GM12878 (cell line): ENCODE measurements at regions of chr19 and their contacts with region 1.

Region 1: DNA sequence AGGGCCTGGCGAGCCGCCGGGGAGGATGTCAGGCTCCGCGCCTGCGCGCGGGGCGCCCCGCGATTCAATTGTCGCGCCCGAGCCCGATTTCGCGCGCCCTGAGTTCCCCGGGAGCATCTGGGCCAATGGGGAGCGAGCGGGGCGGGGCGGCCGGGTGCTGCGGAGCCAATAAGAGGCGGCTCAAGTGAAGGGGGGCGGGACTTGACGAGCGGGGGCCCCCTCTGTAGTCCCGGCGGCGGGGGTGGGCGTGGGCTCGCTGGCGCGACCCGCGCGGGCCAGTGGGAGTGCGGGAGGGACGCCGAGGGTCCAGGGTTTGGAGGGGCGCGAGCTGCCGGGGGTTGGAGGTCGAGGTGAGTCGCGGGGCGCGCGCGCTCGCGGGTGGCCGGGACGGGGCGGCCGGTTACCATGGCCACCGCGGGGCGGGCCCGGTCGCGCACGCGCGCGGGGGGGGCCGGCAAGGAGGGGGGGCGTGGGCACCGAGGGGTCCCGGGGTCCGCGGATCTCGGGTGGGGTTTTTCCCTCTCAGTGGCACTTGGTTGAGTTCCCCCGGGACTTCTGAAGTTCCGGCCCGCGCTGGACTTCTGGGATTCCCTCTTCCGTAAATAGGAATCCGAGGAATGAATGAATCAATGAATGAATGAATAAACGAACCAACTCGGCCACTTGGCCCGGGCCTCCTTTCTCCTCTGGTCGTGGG is 744 bp downstream of the UHRF1 start:
- DNase-seq: peak; percentile 51
- ATAC-seq: peak; percentile 90
- H3K4me3 ChIP-seq: peak overlapping the region; percentile 99
- H3K27ac ChIP-seq: peak overlapping the region; percentile 78
- H3K4me1 ChIP-seq: peaks cover 29% of the 10 kb centered on the region
- H3K27me3 ChIP-seq: no peaks in the 10 kb centered on the region
- CTCF ChIP-seq: no peak
- EP300 ChIP-seq: no peak
- POLR2A ChIP-seq: peak; percentile 56; the same call in 1 of the 2 replicates
- RAD21 ChIP-seq: no peak

Region 2: GRCh38 chr19:4449022-4449638 is 460.9 kb before region 1 on chr19:
- CTCF ChIA-PET with region 1: no interaction called
- POLR2A ChIA-PET with region 1: no interaction called
- RAD21 ChIA-PET with region 1: no interaction called
- SMC1A ChIA-PET with region 1: no interaction called
- in situ Hi-C with region 1: no loop called
- intact Hi-C with region 1: no loop called
- DNase-seq: no peak
- ATAC-seq: no peak; the same call in 2 of the 3 replicates
- H3K4me3 ChIP-seq: no peak overlapping the region
- H3K27ac ChIP-seq: no peak overlapping the region
- H3K4me1 ChIP-seq: no peaks in the 10 kb centered on the region
- H3K27me3 ChIP-seq: no peaks in the 10 kb centered on the region
- CTCF ChIP-seq: no peak
- EP300 ChIP-seq: no peak
- POLR2A ChIP-seq: peak; percentile 39; the same call in 1 of the 2 replicates
- RAD21 ChIP-seq: no peak

Region 3: DNA sequence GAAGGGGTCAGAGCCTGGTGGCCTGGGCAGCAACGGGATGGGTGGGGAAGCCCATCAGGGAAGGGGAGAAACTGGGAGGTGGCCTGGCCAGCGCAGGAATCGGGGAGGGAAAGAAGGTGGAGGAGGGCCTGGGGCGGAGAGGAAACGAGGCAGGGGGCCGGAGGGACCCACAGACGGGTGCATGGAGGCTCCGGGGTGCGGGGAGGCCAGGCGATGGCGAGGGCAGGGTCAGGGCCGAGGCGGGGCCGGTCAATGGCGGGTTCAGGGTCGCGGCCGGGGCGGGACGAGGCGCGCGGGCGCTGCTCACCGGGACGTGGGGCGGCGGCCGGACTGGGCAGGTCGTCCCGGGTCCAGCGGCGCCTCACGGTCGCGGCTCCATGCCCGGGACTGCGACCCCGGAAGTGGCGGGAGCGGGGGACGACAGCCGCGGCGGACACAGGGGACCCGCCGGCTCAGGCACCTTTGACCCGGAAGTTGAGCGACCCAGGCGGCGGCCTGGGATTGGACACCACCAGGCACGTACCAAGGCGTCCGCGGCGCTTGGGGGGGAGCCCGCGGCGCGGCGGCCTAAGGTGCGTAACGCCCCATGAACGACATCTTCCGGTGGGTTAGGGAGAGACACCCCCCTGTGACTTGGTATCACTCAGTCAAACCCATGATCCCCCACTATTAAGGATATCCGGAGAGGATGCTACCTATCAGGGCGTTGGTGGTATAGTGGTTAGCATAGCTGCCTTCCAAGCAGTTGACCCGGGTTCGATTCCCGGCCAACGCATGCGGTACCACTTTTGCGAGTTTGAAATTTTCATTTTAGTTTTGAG is 186.5 kb before region 1 on chr19 and contains the start of gene DPP9:
- CTCF ChIA-PET with region 1: interaction called, 3 read pairs
- POLR2A ChIA-PET with region 1: no interaction called
- RAD21 ChIA-PET with region 1: no interaction called
- SMC1A ChIA-PET with region 1: no interaction called
- in situ Hi-C with region 1: no loop called
- intact Hi-C with region 1: loop called (anchors 5 kb)
- DNase-seq: peak; percentile 100
- ATAC-seq: peak; percentile 96
- H3K4me3 ChIP-seq: peak within 1 kb of the TSS; percentile 100
- H3K27ac ChIP-seq: peak within 1 kb of the TSS; percentile 89
- H3K4me1 ChIP-seq: peaks cover 18% of the 10 kb centered on the region
- H3K27me3 ChIP-seq: no peaks in the 10 kb centered on the region
- CTCF ChIP-seq: peak in 2 of 3 experiments; percentile 21 to 41; a peak in 2 of 6 replicates
- EP300 ChIP-seq: peak; percentile 48 to 85; a peak in 3 of 4 replicates
- POLR2A ChIP-seq: peak; percentile 76
- RAD21 ChIP-seq: no peak
- polyA plus RNA-seq, gene DPP9: 0.64 to 1.2 TPM

Region 4: GRCh38 chr19:4803736-4804695 is 106.0 kb before region 1 on chr19:
- CTCF ChIA-PET with region 1: interaction called, 310 read pairs
- POLR2A ChIA-PET with region 1: no interaction called
- RAD21 ChIA-PET with region 1: interaction called, 176 read pairs
- SMC1A ChIA-PET with region 1: interaction called, 94 read pairs
- in situ Hi-C with region 1: loop called (anchors 5 kb)
- intact Hi-C with region 1: loop called (anchors 1 kb)
- DNase-seq: no peak
- ATAC-seq: peak; percentile 95
- H3K4me3 ChIP-seq: no peak overlapping the region
- H3K27ac ChIP-seq: no peak overlapping the region
- H3K4me1 ChIP-seq: peaks cover 6% of the 10 kb centered on the region
- H3K27me3 ChIP-seq: no peaks in the 10 kb centered on the region
- CTCF ChIP-seq: peak; percentile 86 to 93 (median 90)
- EP300 ChIP-seq: no peak
- POLR2A ChIP-seq: no peak
- RAD21 ChIP-seq: peak; percentile 66

Region 5: GRCh38 chr19:4851551-4852290 is 58.3 kb before region 1 on chr19:
- CTCF ChIA-PET with region 1: interaction called, 28 read pairs
- POLR2A ChIA-PET with region 1: no interaction called
- RAD21 ChIA-PET with region 1: interaction called, 20 read pairs
- SMC1A ChIA-PET with region 1: interaction called, 25 read pairs
- in situ Hi-C with region 1: no loop called
- intact Hi-C with region 1: no loop called
- DNase-seq: no peak
- ATAC-seq: peak; percentile 96
- H3K4me3 ChIP-seq: no peak overlapping the region
- H3K27ac ChIP-seq: no peak overlapping the region; the same call in 1 of the 2 replicates
- H3K4me1 ChIP-seq: peaks cover 28% of the 10 kb centered on the region
- H3K27me3 ChIP-seq: no peaks in the 10 kb centered on the region
- CTCF ChIP-seq: peak; percentile 88 to 92 (median 88)
- EP300 ChIP-seq: no peak
- POLR2A ChIP-seq: no peak; the same call in 1 of the 2 replicates
- RAD21 ChIP-seq: peak; percentile 84

Region 6: GRCh38 chr19:4922530-4923275 is 12.7 kb after region 1 on chr19:
- CTCF ChIA-PET with region 1: no interaction called
- POLR2A ChIA-PET with region 1: no interaction called
- RAD21 ChIA-PET with region 1: no interaction called
- SMC1A ChIA-PET with region 1: no interaction called
- in situ Hi-C with region 1: no loop called
- intact Hi-C with region 1: no loop called
- DNase-seq: no peak
- ATAC-seq: no peak
- H3K4me3 ChIP-seq: no peak overlapping the region
- H3K27ac ChIP-seq: no peak overlapping the region
- H3K4me1 ChIP-seq: no peaks in the 10 kb centered on the region
- H3K27me3 ChIP-seq: no peaks in the 10 kb centered on the region
- CTCF ChIP-seq: no peak
- EP300 ChIP-seq: no peak
- POLR2A ChIP-seq: no peak
- RAD21 ChIP-seq: no peak

Region 7: DNA sequence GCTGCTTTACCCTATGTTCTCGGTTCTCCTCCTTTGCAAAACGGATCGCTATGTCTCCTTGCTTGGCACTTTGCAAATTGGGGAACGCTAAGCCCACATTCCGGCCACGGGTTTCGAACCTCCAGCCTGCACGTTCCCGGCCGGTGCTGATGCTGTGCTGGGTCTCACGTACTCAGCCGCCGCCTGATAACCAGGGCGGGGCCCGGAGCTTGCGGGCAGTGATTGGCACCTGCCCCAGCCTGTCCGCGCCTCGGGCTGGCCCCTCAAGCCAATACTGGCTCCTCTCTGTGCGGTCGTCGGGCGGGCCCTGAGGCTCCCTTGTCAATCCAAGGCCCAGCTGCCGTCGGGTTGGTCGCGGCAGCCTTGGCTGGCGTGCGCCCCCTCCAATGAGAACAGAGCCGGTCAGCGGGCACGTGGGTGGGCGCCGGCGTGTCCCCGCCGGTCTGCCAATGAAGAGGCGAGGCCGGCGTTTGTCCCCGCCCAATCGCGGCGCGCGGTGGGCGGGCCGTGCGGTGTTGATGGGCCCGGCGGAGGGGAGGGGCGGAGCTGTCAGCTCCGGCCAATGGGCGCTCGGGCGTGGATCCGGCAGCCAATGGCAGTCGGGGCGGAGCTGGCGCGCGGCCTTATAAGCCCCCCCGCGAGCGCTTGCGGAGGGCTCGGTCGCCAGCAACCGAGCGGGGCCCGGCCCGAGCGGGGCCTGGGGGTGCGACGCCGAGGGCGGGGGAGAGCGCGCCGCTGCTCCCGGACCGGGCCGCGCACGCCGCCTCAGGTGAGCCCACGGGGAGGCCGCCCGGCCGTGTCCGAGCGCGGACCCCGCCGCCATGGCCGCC is 58.6 kb after region 1 on chr19 and contains the start of gene KDM4B:
- CTCF ChIA-PET with region 1: interaction called, 14 read pairs
- POLR2A ChIA-PET with region 1: interaction called, 5 read pairs
- RAD21 ChIA-PET with region 1: interaction called, 7 read pairs
- SMC1A ChIA-PET with region 1: interaction called, 3 read pairs
- in situ Hi-C with region 1: no loop called
- intact Hi-C with region 1: loop called (anchors 2 kb)
- DNase-seq: peak; percentile 96
- ATAC-seq: peak; percentile 97
- H3K4me3 ChIP-seq: peak within 1 kb of the TSS; percentile 95
- H3K27ac ChIP-seq: peak within 1 kb of the TSS; percentile 67
- H3K4me1 ChIP-seq: peaks cover 12% of the 10 kb centered on the region
- H3K27me3 ChIP-seq: no peaks in the 10 kb centered on the region
- CTCF ChIP-seq: no peak
- EP300 ChIP-seq: no peak
- POLR2A ChIP-seq: peak; percentile 98
- RAD21 ChIP-seq: no peak
- polyA plus RNA-seq, gene KDM4B: 0.47 to 1.8 TPM